ENCODE measurements at regions of chr1 and their contacts with region 1.

Region 1: DNA sequence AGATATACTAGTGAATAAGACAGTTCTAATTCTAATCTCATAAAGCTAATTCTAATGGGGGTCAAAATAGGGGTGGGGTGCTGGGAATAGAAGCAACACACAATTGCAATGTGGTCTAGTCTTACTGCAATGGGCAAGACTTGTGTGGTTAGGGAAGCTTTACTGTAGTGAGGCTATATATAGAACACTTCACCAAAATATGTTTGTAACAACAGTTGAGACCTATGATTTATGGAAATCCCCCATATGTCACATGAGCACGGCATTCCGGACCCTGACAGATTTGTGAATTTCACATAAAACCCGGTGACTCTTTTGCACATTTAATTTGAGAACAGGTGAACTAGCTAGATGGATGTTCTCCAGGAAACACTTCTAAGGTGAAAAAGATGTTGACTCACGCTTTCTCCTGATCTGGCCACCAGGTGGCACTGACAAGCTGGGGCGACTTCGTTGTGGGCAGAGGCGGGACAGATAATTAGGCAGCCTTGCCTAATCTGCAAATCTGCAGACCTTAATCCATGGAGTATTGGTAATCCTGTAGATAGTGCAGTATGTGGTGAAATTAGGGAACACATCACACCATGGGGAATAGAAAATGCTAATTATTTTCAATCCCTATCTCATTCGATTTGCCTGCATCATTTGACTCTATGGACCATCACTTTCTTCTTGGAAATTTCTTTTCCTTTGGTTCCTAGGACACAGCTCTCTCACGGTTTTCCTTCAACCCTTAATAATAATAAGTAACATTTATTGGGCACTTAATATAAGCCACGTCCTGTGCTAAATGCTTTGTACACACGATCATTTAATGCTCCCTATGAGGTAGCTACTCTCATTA is 37.7 kb downstream of the KIAA0040 start:
- DNase-seq: peak in 1 of 2 experiments; percentile 87
- H3K4me3 ChIP-seq: no peak overlapping the region
- H3K27ac ChIP-seq: no peak overlapping the region
- H3K4me1 ChIP-seq: peaks cover 0 to 2% (median under 1%) of the 10 kb centered on the region in 4 experiments; a peak in 1 of 7 replicates
- H3K27me3 ChIP-seq: peaks cover 0 to 2% (median 0%) of the 10 kb centered on the region in 4 experiments; a peak in 3 of 7 replicates
- CTCF ChIP-seq: peak; percentile 84 to 92 (median 91)
- EP300 ChIP-seq: no peak
- POLR2A ChIP-seq: no peak
- RAD21 ChIP-seq: peak; percentile 92 to 95

Region 2: GRCh38 chr1:174912264-174912663 is 242.6 kb before region 1 on chr1:
- CTCF ChIA-PET with region 1: no interaction called
- POLR2A ChIA-PET with region 1: no interaction called
- DNase-seq: no peak
- H3K4me3 ChIP-seq: no peak overlapping the region
- H3K27ac ChIP-seq: no peak overlapping the region
- H3K4me1 ChIP-seq: no peaks in the 10 kb centered on the region; a peak in 1 of 7 replicates
- H3K27me3 ChIP-seq: no peaks in the 10 kb centered on the region
- CTCF ChIP-seq: no peak
- EP300 ChIP-seq: no peak
- POLR2A ChIP-seq: no peak
- RAD21 ChIP-seq: no peak

Region 3: GRCh38 chr1:175023043-175023921 is 131.6 kb before region 1 on chr1 and contains the start of gene MRPS14:
- CTCF ChIA-PET with region 1: interaction called, 21 read pairs
- POLR2A ChIA-PET with region 1: no interaction called
- DNase-seq: peak; percentile 97 to 98
- H3K4me3 ChIP-seq: peak within 1 kb of the TSS; percentile 79 to 98 (median 97)
- H3K27ac ChIP-seq: peak within 1 kb of the TSS; percentile 57; the same call in 1 of the 2 replicates
- H3K4me1 ChIP-seq: no peaks in the 10 kb centered on the region
- H3K27me3 ChIP-seq: no peaks in the 10 kb centered on the region
- CTCF ChIP-seq: no peak
- EP300 ChIP-seq: no peak
- POLR2A ChIP-seq: peak; percentile 83 to 97
- RAD21 ChIP-seq: no peak
- total RNA-seq, gene MRPS14: 38.7 and 40.5 TPM in 2 replicates

Region 4: DNA sequence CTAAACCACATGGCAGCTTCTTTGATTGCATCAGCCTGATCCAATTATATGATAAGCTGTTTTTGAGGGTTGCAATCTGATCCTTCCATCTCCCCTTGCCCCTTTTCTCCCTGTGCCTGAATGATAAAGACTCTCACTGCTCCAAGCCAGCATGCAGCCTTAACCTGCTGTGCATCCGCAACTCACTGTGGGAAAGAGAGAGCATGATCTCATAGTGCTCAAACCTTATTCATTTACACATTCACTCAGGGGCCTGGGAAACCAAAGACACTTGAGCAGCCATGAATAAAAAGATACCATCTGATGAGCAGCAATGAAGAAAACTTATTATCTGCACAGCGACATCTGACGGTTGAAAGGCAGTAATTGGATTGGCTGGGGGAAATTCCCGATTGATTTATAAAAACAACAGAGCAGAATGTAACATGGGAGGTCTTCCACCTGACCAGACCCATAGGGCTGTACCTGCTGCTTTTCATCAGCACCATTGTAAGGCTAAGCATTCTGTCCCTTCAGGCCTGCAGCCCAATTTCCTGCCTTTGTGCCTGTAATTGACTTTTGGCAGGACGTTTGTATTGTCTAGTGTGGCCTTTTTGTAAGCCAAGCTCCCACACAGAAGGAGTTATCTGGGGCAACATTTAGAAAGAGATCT is 24.7 kb before region 1 on chr1:
- CTCF ChIA-PET with region 1: interaction called, 39 read pairs
- POLR2A ChIA-PET with region 1: interaction called, 4 read pairs
- DNase-seq: peak in 1 of 2 experiments; percentile 49
- H3K4me3 ChIP-seq: peak overlapping the region in 1 of 4 experiments; percentile 18; a peak in 1 of 8 replicates
- H3K27ac ChIP-seq: peak overlapping the region; percentile 89; the same call in 1 of the 2 replicates
- H3K4me1 ChIP-seq: peaks cover 0 to 26% (median 17%) of the 10 kb centered on the region in 4 experiments; a peak in 4 of 7 replicates
- H3K27me3 ChIP-seq: no peaks in the 10 kb centered on the region
- CTCF ChIP-seq: peak in 1 of 3 experiments; percentile 7; a peak in 1 of 4 replicates
- EP300 ChIP-seq: peak in 1 of 2 experiments; percentile 40; a peak in 1 of 3 replicates
- POLR2A ChIP-seq: peak in 1 of 2 experiments; percentile 31; a peak in 1 of 3 replicates
- RAD21 ChIP-seq: no peak

Region 5: GRCh38 chr1:175174309-175175165 is 19.7 kb after region 1 on chr1:
- CTCF ChIA-PET with region 1: interaction called, 35 read pairs
- POLR2A ChIA-PET with region 1: interaction called, 3 read pairs
- DNase-seq: no peak
- H3K4me3 ChIP-seq: no peak overlapping the region
- H3K27ac ChIP-seq: no peak overlapping the region
- H3K4me1 ChIP-seq: no peaks in the 10 kb centered on the region
- H3K27me3 ChIP-seq: no peaks in the 10 kb centered on the region
- CTCF ChIP-seq: no peak
- EP300 ChIP-seq: no peak
- POLR2A ChIP-seq: no peak
- RAD21 ChIP-seq: no peak

Region 6: DNA sequence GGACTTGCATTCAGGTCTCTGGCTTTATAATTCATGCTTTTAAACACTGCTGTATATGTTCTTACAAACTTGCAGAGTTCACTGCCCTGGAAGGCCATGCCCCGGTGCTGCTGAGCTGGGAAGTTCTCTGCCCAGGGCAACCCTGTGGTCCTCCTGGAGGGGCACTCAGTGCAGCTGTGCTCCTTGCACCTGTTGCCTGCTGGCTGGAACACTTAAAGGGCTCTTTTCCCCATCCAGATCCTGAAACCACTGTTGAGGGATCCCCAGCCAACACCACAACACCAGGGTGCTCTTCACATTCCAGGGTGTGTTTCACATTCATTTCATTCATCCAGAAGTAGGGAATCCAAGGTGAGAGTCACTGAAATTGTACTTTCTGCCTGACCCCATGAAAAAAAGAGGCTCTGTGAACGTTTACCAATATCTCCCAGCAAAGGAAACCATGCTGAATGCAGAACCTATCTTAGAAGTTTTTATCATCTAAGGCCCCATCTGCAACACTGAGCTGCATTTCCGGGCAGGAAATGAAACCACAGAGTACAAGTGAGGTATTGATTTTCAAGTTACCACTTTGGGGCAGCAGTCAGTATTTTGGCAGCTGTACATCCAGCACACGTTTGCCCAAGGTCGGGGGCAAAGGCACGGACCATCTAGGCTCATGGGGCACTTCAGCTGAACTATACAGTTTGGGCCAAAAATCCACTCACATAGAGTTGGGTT is 54.1 kb after region 1 on chr1:
- CTCF ChIA-PET with region 1: interaction called, 26 read pairs
- POLR2A ChIA-PET with region 1: no interaction called
- DNase-seq: no peak
- H3K4me3 ChIP-seq: no peak overlapping the region
- H3K27ac ChIP-seq: no peak overlapping the region
- H3K4me1 ChIP-seq: no peaks in the 10 kb centered on the region
- H3K27me3 ChIP-seq: no peaks in the 10 kb centered on the region
- CTCF ChIP-seq: no peak
- EP300 ChIP-seq: no peak
- POLR2A ChIP-seq: no peak
- RAD21 ChIP-seq: no peak

Region 7: GRCh38 chr1:175307160-175307559 is 152.3 kb after region 1 on chr1:
- CTCF ChIA-PET with region 1: interaction called, 260 read pairs
- POLR2A ChIA-PET with region 1: no interaction called
- DNase-seq: no peak
- H3K4me3 ChIP-seq: no peak overlapping the region
- H3K27ac ChIP-seq: no peak overlapping the region
- H3K4me1 ChIP-seq: peaks cover 0 to 3% (median 0%) of the 10 kb centered on the region in 4 experiments; a peak in 1 of 7 replicates
- H3K27me3 ChIP-seq: no peaks in the 10 kb centered on the region
- CTCF ChIP-seq: no peak
- EP300 ChIP-seq: no peak
- POLR2A ChIP-seq: no peak
- RAD21 ChIP-seq: no peak

Region 8: GRCh38 chr1:175373786-175374623 is 219.2 kb after region 1 on chr1:
- CTCF ChIA-PET with region 1: interaction called, 14 read pairs
- POLR2A ChIA-PET with region 1: no interaction called
- DNase-seq: peak; percentile 21 to 85
- H3K4me3 ChIP-seq: no peak overlapping the region
- H3K27ac ChIP-seq: no peak overlapping the region
- H3K4me1 ChIP-seq: peaks cover 0 to 4% (median 0%) of the 10 kb centered on the region in 4 experiments; a peak in 3 of 7 replicates
- H3K27me3 ChIP-seq: no peaks in the 10 kb centered on the region; a peak in 1 of 7 replicates
- CTCF ChIP-seq: peak; percentile 86 to 91 (median 90)
- EP300 ChIP-seq: no peak
- POLR2A ChIP-seq: no peak
- RAD21 ChIP-seq: peak; percentile 97 to 99

Region 9: GRCh38 chr1:175466556-175466955 is 311.7 kb after region 1 on chr1:
- CTCF ChIA-PET with region 1: no interaction called
- POLR2A ChIA-PET with region 1: no interaction called
- DNase-seq: no peak
- H3K4me3 ChIP-seq: no peak overlapping the region
- H3K27ac ChIP-seq: no peak overlapping the region
- H3K4me1 ChIP-seq: no peaks in the 10 kb centered on the region
- H3K27me3 ChIP-seq: no peaks in the 10 kb centered on the region
- CTCF ChIP-seq: no peak
- EP300 ChIP-seq: no peak
- POLR2A ChIP-seq: no peak
- RAD21 ChIP-seq: no peak

Measured in H1 (cell line).